Activated CD8-positive, alpha-beta T cell treated with anti-CD3 and anti-CD28 coated beads for 36 hours (primary cell): ENCODE measurements at regions of chr7 and their contacts with region 1.

Region 1: DNA sequence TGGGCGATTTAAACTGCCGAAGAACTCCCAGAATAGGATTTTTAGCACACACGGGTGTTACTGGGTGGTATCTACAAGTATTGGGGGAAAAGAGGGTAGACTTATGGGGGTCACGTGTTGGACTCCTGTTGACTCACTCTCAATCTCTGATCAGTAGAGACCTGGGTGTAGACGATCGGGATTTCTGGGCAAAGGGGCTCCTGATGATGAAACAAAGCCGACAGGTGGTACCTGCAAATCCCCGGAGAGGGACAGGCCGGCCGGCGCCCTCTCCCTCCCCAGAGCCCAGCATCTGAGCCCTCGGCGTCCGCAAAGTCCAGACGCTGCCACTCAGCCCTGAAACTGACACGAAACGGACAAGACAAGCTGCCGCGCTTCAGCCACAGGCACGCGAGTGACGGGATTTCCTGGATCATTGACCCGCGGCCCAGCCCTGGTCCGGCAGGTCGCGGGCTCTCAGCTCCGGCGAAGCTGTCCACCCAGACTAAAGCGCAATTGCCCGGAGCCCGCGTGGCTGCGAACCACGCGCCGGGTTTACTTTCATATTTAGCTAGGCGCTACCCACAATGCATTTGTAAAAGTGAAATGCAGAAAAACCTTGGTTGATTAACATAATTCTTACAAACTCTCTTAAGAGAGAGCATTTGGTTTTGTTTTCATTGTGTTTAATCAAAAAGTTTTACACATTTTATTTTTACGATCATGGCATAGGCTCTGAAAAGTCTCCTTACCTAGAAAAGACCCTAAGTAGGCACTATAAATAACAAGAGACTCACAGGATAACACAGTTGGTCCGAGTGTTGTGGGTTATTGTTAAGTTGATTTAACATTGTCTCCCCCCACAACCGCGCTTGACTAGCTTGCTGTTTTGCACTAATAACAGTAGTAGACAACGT is 56.9 kb upstream of the EZH2 start:
- DNase-seq: peak; percentile 84
- ATAC-seq: peak; percentile 72
- H3K4me3 Mint-ChIP-seq: peak overlapping the region; percentile 98
- H3K27ac Mint-ChIP-seq: peak overlapping the region; percentile 100
- H3K4me1 Mint-ChIP-seq: peaks cover 17% of the 10 kb centered on the region
- H3K27me3 Mint-ChIP-seq: no peaks in the 10 kb centered on the region
- CTCF ChIP-seq: no peak

Region 2: DNA sequence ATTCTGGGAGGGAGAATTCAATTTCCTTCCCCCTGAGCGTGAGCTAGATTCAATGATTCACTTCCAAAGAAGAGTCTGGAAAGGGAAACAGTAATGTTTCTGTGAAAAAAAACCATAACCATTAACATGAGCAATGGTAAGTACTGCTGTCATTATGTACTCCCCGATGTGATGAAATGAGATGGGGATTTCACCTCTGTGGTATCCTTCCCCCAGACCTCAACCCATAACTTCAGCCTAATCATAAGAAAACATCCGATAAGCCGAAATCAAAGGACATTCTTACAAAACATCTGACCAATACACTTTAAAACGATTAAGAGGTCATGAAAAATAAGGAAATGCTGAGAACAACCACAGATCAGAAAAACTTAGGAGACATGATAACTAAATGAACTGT is 84.1 kb before region 1 on chr7:
- CTCF ChIA-PET with region 1: interaction called, 43 read pairs
- POLR2A ChIA-PET with region 1: interaction called, 6 read pairs
- intact Hi-C with region 1: no loop called
- DNase-seq: peak; percentile 20
- ATAC-seq: peak; percentile 76
- H3K4me3 Mint-ChIP-seq: peak overlapping the region; percentile 33
- H3K27ac Mint-ChIP-seq: peak overlapping the region; percentile 81
- H3K4me1 Mint-ChIP-seq: peaks cover 39% of the 10 kb centered on the region
- H3K27me3 Mint-ChIP-seq: no peaks in the 10 kb centered on the region
- CTCF ChIP-seq: no peak

Region 3: DNA sequence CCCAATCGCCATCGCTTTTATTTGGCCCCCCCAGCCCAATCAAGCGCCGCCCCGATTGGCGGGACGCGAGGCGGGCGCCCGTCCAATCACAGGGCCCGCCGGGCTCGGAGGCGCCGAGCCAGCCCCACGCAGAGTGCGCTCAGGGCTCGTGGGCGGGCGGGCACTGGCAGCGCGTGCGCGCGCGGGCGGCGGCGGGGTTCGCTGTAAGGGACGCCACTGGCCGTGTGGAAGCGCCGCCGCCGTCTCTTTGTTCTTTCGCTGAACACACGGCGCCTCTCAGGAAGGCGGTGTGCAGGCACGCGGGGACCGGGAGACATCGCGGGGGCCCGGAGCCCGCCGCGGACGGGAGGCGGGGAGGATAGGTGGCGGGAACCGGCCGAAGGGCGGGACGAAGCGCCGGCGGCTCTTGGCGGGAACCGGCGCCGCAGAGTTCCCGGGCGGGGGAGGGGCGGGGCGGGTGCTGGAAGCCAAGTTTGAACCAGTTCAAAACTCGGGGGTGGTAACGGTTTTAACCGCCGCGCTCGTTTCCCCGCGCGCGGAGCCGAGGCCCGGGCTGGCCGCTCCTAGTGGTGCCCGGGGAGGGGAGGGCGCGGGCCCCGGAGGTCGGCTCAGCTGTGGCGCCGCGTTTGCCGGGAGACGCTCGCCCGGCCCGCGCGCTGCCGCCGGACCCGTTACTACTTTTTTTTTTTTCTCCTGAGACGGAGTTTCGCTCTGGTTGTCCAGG is 56.5 kb before region 1 on chr7:
- CTCF ChIA-PET with region 1: interaction called, 17 read pairs
- POLR2A ChIA-PET with region 1: interaction called, 63 read pairs
- intact Hi-C with region 1: loop called (anchors 1 kb)
- DNase-seq: peak; percentile 94
- ATAC-seq: peak; percentile 93
- H3K4me3 Mint-ChIP-seq: peak overlapping the region; percentile 94
- H3K27ac Mint-ChIP-seq: peak overlapping the region; percentile 98
- H3K4me1 Mint-ChIP-seq: peaks cover 30% of the 10 kb centered on the region
- H3K27me3 Mint-ChIP-seq: no peaks in the 10 kb centered on the region
- CTCF ChIP-seq: no peak

Region 4: DNA sequence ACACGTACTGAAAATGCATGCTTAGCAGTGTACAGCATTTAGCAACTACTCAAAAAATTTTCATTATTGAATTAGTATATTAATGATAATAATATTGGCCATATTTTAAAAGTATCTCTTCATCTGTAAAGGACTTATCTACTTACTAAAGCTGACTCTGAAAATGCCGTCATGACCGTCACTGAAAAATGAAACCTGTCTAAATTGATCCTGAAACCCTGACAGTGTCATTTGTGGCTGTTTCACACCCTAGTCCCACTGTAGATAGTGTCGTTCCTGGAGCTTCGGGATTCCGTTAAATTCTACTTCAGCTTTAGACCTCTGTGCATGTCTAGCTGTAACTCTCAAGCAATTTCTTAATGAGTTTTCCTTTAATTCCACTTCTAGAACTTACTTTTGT is 21.1 kb before region 1 on chr7:
- CTCF ChIA-PET with region 1: interaction called, 38 read pairs
- POLR2A ChIA-PET with region 1: interaction called, 107 read pairs
- intact Hi-C with region 1: no loop called
- DNase-seq: no peak
- ATAC-seq: no peak
- H3K4me3 Mint-ChIP-seq: no peak overlapping the region
- H3K27ac Mint-ChIP-seq: no peak overlapping the region
- H3K4me1 Mint-ChIP-seq: peaks cover 60% of the 10 kb centered on the region
- H3K27me3 Mint-ChIP-seq: no peaks in the 10 kb centered on the region
- CTCF ChIP-seq: no peak

Region 5: DNA sequence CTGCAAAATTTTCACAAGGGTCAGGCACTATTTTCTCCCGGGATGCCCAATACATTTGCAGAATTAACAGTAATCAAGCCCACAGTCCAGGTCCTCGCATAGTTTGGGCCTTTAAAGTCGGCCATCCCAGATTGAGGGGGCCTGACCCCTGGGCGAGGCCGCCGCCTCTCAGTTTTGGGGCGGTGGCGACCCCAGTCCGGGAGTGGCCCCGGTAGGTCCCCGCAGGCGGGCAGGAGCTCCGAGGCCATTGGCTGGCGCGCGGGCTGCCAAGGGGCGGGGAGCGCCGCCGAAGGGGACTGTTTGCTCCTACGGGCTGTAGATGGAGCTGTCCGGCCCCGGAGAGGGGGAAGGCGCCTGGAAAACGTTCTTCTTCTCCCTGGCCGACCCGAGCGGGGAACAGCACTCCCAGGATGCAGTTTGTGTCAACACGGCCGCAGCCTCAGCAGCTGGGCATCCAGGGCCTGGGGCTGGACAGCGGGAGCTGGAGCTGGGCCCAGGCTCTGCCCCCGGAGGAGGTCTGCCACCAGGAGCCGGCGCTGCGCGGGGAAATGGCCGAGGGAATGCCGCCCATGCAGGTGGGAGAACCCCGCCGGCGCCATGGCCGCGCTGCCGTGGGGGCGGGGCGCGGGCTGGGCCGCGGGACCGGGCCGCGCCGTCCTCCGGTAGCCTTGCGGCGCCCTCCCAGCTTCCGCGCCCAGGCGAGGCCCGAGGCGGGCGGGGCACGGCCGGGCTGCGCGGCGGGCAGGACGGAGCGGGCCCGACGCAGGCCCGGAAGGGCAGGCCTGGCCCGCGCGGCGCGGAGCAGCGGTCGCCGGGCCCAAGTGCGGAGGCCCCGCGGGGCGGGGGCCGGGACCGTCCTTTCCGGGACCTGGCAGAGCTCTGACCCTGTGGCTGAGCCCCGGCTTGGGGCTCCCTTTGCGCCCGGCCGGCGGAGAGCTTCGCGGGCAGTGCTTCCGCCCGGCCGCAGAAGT is 254.5 kb after region 1 on chr7 and contains the start of gene ZNF282:
- CTCF ChIA-PET with region 1: no interaction called
- POLR2A ChIA-PET with region 1: no interaction called
- intact Hi-C with region 1: no loop called
- DNase-seq: peak; percentile 84
- ATAC-seq: peak; percentile 94
- H3K4me3 Mint-ChIP-seq: peak within 1 kb of the TSS; percentile 92
- H3K27ac Mint-ChIP-seq: peak within 1 kb of the TSS; percentile 92
- H3K4me1 Mint-ChIP-seq: peaks cover 45% of the 10 kb centered on the region
- H3K27me3 Mint-ChIP-seq: no peaks in the 10 kb centered on the region
- CTCF ChIP-seq: peak; percentile 65
- total RNA-seq, gene ZNF282: 29.3 to 29.7 TPM